ENCODE measurements at regions of chr6 and their contacts with region 1.

Region 1: DNA sequence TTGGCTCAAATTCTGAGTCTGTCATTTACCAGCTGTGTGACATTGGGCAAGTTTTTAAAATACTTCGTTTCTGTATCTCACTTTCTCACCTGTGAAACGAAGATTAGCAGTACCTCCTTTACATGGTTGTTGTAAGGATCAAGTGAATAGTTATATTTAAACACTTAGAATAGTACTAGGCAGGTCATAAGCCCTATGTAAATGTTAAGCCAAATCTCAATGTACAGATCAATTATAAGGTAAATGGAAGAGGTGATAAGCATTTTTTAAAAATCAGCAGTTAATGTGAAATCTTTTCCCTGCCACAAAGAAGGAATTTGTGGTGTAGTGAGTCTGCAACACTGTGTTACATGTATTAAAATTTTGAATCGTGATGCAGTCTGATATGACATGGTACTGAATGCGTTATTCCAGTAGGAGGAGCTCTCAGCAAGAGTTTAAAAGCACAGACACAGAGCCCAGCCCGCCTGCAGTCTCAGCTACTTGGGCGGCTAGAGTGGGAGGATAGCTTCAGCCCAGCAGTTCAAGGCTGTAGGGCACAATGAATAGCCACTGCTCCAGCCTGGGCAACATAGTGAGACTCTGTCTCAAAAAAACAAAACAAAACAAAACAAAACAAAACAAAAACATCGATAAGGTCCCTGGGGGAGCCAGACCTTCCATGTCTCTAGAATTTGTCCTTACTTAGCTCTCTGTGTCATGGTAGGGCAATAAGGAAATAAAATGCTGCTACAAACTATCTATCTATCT is 46.0 kb downstream of the GTF2H5 start:
- DNase-seq: peak; percentile 73
- ATAC-seq: peak; percentile 98
- H3K4me3 Mint-ChIP-seq: no peak overlapping the region
- H3K27ac Mint-ChIP-seq: no peak overlapping the region
- H3K4me1 Mint-ChIP-seq: peaks cover 16% of the 10 kb centered on the region
- H3K27me3 Mint-ChIP-seq: peaks cover under 1% of the 10 kb centered on the region
- CTCF ChIP-seq: peak; percentile 81

Region 2: GRCh38 chr6:157764178-157765033 is 449.7 kb before region 1 on chr6:
- CTCF ChIA-PET with region 1: no interaction called
- POLR2A ChIA-PET with region 1: no interaction called
- intact Hi-C with region 1: no loop called
- DNase-seq: peak; percentile 88
- ATAC-seq: peak; percentile 58
- H3K4me3 Mint-ChIP-seq: peak overlapping the region; percentile 40
- H3K27ac Mint-ChIP-seq: peak overlapping the region; percentile 97
- H3K4me1 Mint-ChIP-seq: peaks cover 87% of the 10 kb centered on the region
- H3K27me3 Mint-ChIP-seq: no peaks in the 10 kb centered on the region
- CTCF ChIP-seq: no peak

Region 3: DNA sequence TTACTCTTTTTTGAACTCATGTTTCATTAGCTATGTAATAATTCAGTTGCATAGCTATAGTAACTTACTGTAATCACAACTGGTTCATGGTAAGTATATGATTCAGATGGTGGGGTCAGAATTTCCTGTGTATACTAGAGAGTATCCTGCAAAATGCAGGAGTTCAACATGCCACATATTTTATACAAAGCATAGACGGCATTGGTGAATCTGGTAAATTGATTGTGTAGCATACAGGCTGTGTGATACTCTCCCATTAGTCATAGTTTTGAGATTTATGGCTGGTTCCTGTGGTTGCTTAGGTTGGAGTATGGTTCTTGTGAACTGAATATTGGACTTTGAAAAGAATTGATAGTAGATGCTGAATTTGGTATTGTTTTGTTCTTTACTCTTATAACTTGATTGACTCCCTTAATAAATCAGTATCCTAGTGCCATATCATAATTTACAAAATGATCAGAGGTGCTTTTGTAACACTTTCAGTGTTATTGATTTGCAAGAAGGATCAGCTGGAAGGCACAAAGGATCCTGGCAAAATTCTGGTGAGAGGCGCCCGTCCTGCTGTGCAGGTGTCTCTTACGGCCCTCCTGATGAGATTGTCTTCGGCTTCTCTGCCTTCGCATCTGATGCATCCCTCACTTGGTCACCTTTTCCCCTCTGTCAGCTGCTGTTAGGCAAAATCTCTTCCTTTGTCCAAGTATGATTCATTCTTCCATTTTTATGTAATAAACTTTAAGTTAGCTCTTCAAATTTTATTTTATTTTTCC is 368.4 kb before region 1 on chr6:
- CTCF ChIA-PET with region 1: no interaction called
- POLR2A ChIA-PET with region 1: no interaction called
- intact Hi-C with region 1: no loop called
- DNase-seq: no peak
- ATAC-seq: peak; percentile 58
- H3K4me3 Mint-ChIP-seq: no peak overlapping the region
- H3K27ac Mint-ChIP-seq: peak overlapping the region; percentile 40
- H3K4me1 Mint-ChIP-seq: peaks cover 86% of the 10 kb centered on the region
- H3K27me3 Mint-ChIP-seq: no peaks in the 10 kb centered on the region
- CTCF ChIP-seq: no peak

Region 4: DNA sequence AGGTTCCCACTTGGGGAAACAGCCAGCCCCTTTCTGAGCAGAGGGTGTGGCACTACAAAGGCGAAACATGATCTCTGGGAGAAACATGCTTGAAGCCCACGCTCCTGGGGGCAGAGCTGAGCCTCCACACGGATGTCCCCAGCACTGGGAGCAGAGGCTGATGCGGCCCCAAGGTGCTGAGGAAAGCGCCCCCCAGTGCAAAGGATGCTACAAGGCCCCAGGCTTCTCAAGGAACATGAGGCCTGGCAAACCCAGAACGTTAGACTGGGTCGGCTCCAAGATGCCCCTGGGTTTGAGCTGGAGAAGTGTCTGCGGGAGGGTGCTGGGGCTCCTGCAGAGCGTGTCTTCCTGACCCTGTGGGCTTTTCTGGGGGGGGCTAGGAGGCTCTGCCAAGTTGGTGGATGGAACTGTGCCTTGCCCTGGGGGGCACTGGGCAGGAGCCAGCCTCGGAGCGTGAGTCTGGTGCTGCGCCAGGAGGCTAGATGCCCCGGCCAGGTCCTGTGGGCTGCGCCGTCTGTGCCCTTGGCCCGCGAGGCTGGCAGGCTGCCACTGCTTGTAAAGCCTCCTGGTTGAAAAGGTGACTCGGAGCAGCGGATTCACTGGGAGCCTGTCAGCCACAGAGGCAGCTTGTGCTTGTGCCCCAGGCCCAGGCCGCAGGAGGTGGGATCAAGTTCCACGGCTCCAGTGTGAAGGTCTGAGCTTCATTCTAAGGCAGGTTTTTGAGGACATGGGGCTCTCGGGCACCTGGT is 224.4 kb before region 1 on chr6:
- CTCF ChIA-PET with region 1: no interaction called
- POLR2A ChIA-PET with region 1: no interaction called
- intact Hi-C with region 1: no loop called
- DNase-seq: peak; percentile 44
- ATAC-seq: peak; percentile 29
- H3K4me3 Mint-ChIP-seq: peak overlapping the region; percentile 62
- H3K27ac Mint-ChIP-seq: peak overlapping the region; percentile 80
- H3K4me1 Mint-ChIP-seq: peaks cover 47% of the 10 kb centered on the region
- H3K27me3 Mint-ChIP-seq: no peaks in the 10 kb centered on the region
- CTCF ChIP-seq: no peak

Region 5: DNA sequence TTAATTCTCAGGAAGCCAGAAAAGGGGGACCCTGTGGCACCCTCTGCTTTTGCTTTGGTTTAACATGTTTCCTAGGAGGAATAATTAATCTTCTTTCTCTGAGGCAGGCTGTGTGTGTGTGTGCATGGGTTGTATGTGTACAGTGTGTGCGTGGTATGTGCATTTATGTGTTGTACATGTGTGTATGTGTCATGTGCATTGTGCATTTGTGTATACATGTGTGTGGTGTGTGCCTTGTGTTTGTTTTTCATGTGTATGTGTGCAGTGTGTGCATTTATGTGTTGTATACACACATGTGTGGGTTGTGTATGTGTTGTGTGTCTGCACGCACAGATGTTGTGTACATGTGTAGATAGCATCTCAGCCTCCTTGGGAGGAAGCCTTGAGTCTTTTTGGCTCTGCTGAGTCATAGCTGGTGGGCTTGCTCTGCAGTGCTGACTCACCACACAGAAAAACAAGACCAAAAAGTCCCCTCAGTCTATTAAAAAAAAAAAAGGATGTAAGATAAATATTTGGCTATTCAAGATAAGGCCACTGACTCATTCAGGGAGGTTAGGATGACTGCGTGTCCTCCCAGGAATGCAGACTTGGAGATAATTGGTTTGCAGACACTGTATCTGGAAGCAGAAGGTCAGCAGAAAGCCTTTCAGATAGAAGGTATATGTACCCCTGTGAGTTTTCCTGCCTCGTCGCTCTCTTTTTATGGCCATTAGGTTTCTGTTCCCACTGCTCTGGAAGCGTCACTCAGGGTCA is 173.9 kb before region 1 on chr6:
- CTCF ChIA-PET with region 1: no interaction called
- POLR2A ChIA-PET with region 1: no interaction called
- intact Hi-C with region 1: no loop called
- DNase-seq: peak; percentile 60
- ATAC-seq: peak; percentile 77
- H3K4me3 Mint-ChIP-seq: no peak overlapping the region
- H3K27ac Mint-ChIP-seq: peak overlapping the region; percentile 56
- H3K4me1 Mint-ChIP-seq: peaks cover 27% of the 10 kb centered on the region
- H3K27me3 Mint-ChIP-seq: no peaks in the 10 kb centered on the region
- CTCF ChIP-seq: no peak

Region 6: DNA sequence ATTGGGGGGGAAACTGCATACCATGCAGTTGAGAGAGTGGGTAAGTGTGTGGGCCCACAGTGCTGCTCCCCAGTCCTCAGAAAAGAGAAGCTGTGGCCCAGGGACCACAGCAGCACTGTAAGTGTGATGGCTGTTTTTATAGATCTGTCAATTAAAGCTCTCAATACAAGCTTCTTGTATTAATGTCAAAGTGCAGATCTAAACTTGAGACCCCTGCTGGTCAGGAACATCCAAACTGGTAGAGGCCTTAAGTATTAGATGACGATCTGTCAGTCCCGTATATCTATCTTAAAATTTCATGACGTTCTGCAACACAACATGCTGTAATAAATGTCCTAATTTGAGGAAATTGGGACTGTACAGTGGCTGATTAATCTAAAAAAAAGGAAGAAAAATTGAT is 172.9 kb after region 1 on chr6:
- CTCF ChIA-PET with region 1: interaction called, 41 read pairs
- POLR2A ChIA-PET with region 1: no interaction called
- intact Hi-C with region 1: no loop called
- DNase-seq: peak; percentile 22
- ATAC-seq: no peak
- H3K4me3 Mint-ChIP-seq: no peak overlapping the region
- H3K27ac Mint-ChIP-seq: no peak overlapping the region
- H3K4me1 Mint-ChIP-seq: peaks cover 6% of the 10 kb centered on the region
- H3K27me3 Mint-ChIP-seq: no peaks in the 10 kb centered on the region
- CTCF ChIP-seq: peak; percentile 20

Region 7: GRCh38 chr6:158605266-158605878 is 391.3 kb after region 1 on chr6:
- CTCF ChIA-PET with region 1: interaction called, 49 read pairs
- POLR2A ChIA-PET with region 1: no interaction called
- intact Hi-C with region 1: loop called (anchors 10 kb)
- DNase-seq: peak; percentile 75
- ATAC-seq: peak; percentile 80
- H3K4me3 Mint-ChIP-seq: no peak overlapping the region
- H3K27ac Mint-ChIP-seq: no peak overlapping the region
- H3K4me1 Mint-ChIP-seq: no peaks in the 10 kb centered on the region
- H3K27me3 Mint-ChIP-seq: no peaks in the 10 kb centered on the region
- CTCF ChIP-seq: peak; percentile 85

Measured in activated CD8-positive, alpha-beta T cell treated with anti-CD3 and anti-CD28 coated beads for 36 hours (primary cell).